GM12878 (cell line): ENCODE measurements at regions of chr22 and their contacts with region 1.

Region 1: DNA sequence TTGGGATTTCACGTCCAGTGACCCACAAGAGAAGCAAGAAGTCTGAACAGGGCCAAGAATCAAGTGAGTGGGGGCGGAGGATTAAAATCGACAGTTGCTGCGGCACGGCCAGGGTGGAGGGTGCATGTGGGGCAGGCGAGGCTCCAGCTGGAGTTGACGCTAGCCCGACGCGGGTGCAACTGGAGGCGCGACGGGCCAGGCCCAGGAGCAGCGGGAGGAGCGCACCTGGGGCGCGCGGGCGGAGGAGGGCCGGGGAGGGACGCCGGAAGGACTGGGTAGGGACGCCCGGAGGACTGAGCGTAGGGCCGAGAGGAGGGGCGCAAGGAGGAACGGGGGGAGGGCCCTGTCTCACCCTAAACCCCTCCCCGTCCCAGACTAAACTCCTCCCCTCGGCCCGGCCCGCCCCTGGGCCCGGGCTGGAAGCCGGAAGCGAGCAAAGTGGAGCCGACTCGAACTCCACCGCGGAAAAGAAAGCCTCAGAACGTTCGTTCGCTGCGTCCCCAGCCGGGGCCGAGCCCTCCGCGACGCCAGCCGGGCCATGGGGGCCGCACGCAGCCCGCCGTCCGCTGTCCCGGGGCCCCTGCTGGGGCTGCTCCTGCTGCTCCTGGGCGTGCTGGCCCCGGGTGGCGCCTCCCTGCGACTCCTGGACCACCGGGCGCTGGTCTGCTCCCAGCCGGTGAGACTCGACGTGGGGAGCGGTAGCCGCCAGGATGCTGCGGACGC is at the start of gene IL17RA:
- DNase-seq: peak; percentile 68
- ATAC-seq: peak; percentile 96
- H3K4me3 ChIP-seq: peak within 1 kb of the TSS; percentile 84
- H3K27ac ChIP-seq: peak within 1 kb of the TSS; percentile 81
- H3K4me1 ChIP-seq: peaks cover 19% of the 10 kb centered on the region
- H3K27me3 ChIP-seq: no peaks in the 10 kb centered on the region
- CTCF ChIP-seq: no peak
- EP300 ChIP-seq: no peak
- POLR2A ChIP-seq: peak; percentile 88
- RAD21 ChIP-seq: no peak
- polyA plus RNA-seq, gene IL17RA: 0.71 to 0.75 TPM

Region 2: GRCh38 chr22:16804882-16805281 is 279.8 kb before region 1 on chr22:
- CTCF ChIA-PET with region 1: no interaction called
- POLR2A ChIA-PET with region 1: no interaction called
- RAD21 ChIA-PET with region 1: no interaction called
- SMC1A ChIA-PET with region 1: no interaction called
- in situ Hi-C with region 1: no loop called
- intact Hi-C with region 1: loop called (anchors 10 kb)
- DNase-seq: no peak
- ATAC-seq: peak; percentile 91
- H3K4me3 ChIP-seq: no peak overlapping the region
- H3K27ac ChIP-seq: no peak overlapping the region
- H3K4me1 ChIP-seq: no peaks in the 10 kb centered on the region
- H3K27me3 ChIP-seq: no peaks in the 10 kb centered on the region
- CTCF ChIP-seq: no peak
- EP300 ChIP-seq: peak; percentile 9 to 35; a peak in 1 of 4 replicates
- POLR2A ChIP-seq: no peak
- RAD21 ChIP-seq: no peak

Region 3: GRCh38 chr22:17158568-17159503 is 74.1 kb after region 1 on chr22 and contains the start of gene HDHD5:
- CTCF ChIA-PET with region 1: interaction called, 4 read pairs
- POLR2A ChIA-PET with region 1: no interaction called
- RAD21 ChIA-PET with region 1: no interaction called
- SMC1A ChIA-PET with region 1: interaction called, 3 read pairs
- in situ Hi-C with region 1: no loop called
- intact Hi-C with region 1: loop called (anchors 1 kb)
- DNase-seq: no peak
- ATAC-seq: peak; percentile 90
- H3K4me3 ChIP-seq: peak within 1 kb of the TSS; percentile 79
- H3K27ac ChIP-seq: peak within 1 kb of the TSS; percentile 61
- H3K4me1 ChIP-seq: peaks cover 3% of the 10 kb centered on the region; the same call in 1 of the 2 replicates
- H3K27me3 ChIP-seq: no peaks in the 10 kb centered on the region
- CTCF ChIP-seq: no peak
- EP300 ChIP-seq: no peak
- POLR2A ChIP-seq: peak; percentile 47
- RAD21 ChIP-seq: no peak
- polyA plus RNA-seq, gene HDHD5: 1.7 to 7.7 TPM